ENCODE measurements at regions of chr1 and their contacts with region 1.

Region 1: GRCh38 chr1:24830680-24831272 is 85.5 kb downstream of the CLIC4 start:
- DNase-seq: no peak
- H3K4me3 Mint-ChIP-seq: no peak overlapping the region
- H3K27ac Mint-ChIP-seq: no peak overlapping the region
- H3K4me1 Mint-ChIP-seq: no peaks in the 10 kb centered on the region
- H3K27me3 Mint-ChIP-seq: no peaks in the 10 kb centered on the region

Region 2: DNA sequence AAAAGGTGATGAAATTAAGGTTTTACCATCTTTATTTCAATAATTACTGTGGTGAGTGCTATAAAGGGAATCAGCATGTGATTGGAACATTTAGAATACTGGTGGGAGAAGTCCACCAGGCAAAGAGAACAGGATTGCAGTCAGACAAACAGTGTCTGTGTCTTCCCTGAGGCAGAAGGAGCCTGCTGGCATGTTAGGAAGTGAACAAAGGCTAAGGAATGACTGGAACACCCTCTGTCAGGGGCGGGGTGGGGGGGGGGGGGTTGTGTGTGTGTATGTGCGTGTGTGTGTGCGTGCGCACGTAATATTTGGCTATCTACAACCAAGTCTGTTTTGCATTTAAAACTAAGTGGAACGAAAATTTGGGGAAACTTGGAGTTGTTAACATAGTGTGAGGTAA is 157.4 kb before region 1 on chr1:
- CTCF ChIA-PET with region 1: interaction called, 11 read pairs
- intact Hi-C with region 1: no loop called
- DNase-seq: no peak
- H3K4me3 Mint-ChIP-seq: no peak overlapping the region
- H3K27ac Mint-ChIP-seq: no peak overlapping the region
- H3K4me1 Mint-ChIP-seq: no peaks in the 10 kb centered on the region
- H3K27me3 Mint-ChIP-seq: no peaks in the 10 kb centered on the region

Region 3: DNA sequence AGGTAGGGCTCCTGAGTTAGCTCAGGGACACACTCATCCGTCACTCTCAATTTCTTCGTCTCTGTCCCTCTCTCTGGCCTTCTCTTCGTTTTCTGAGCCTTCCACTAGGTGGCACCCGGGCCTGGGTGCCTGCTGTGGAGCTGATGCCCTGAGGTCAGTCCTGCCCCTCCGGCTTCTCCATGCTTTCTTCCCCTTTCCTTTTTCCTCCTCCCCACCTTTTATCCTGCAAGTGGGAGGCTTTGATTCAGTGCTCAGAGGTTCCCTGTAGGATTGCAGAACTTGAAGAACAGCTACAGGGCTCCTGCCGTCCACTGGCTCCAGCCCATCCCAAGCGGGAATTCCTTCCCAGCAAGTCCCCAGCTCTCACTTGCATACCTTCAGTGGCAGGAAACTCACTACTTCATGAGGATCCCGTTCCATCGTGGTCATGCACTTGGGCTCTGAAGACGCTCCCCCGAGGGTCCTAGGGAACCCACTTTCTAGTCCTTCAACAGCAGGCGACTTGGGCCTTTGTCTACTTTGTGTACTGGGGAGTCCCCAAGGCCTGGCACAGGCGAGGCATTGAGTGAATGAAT is 142.1 kb before region 1 on chr1:
- CTCF ChIA-PET with region 1: interaction called, 177 read pairs
- intact Hi-C with region 1: loop called (anchors 2 kb)
- DNase-seq: peak; percentile 75
- H3K4me3 Mint-ChIP-seq: no peak overlapping the region
- H3K27ac Mint-ChIP-seq: no peak overlapping the region
- H3K4me1 Mint-ChIP-seq: no peaks in the 10 kb centered on the region
- H3K27me3 Mint-ChIP-seq: no peaks in the 10 kb centered on the region